ENCODE measurements at regions of chr2 and their contacts with region 1.

Region 1: GRCh38 chr2:136117909-136118818 is at the start of gene CXCR4:
- DNase-seq: peak; percentile 89
- H3K4me3 ChIP-seq: peak within 1 kb of the TSS; percentile 92
- H3K27ac ChIP-seq: peak within 1 kb of the TSS; percentile 92
- H3K4me1 ChIP-seq: peaks cover 66% of the 10 kb centered on the region
- CTCF ChIP-seq: peak; percentile 33; the same call in 1 of the 2 replicates
- total RNA-seq, gene CXCR4: 367 and 432 TPM in 2 replicates

Region 2: DNA sequence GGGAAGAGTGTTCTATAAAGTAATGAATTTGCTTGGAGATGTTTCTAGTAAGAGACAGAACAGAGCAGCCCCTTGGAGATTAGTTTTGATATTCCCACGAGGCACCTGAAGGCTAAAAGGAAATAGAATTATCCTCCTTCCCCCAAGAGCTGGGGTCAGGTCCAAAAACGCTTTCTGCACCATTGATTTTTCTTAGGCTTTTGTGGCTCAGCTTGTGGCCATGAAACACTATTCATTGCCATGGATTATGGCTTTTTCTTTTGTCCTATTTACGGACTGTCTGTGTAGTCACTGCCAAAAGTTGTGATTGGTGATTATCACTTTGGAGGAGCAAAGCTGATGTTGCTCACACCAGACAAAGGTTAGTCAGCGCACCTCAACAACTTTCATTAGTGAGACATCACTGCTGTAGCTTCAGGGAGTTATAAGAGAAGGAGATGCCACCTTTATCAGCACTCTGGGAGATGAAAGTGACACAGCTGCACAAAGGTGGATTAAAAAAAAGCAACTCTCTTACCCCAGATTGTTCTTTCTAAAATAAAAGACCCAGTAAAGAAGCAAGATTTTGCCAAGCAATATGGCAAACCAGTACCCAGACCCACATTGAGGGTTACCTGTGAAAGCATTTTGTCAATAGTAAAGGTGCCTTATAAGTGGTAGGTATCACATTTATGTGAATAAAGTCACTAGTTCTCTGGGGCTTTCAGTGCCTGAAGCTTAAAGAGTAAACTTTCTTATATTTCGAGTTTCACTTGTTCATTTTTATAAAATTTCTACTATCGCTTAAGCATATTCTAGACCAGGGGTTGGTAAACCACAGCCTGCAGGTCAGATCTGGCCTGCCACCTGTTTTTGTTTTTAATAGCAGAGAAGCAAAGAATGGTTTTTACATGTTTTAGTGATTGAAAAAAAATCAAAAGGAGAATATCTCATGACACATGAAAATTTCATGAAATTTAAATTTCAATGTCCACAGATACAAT is 10.8 kb before region 1 on chr2:
- CTCF ChIA-PET with region 1: no interaction called
- POLR2A ChIA-PET with region 1: interaction called, 17 read pairs
- intact Hi-C with region 1: no loop called
- DNase-seq: no peak
- H3K4me3 ChIP-seq: peak overlapping the region; percentile 15
- H3K27ac ChIP-seq: peak overlapping the region; percentile 32
- H3K4me1 ChIP-seq: peaks cover 65% of the 10 kb centered on the region
- CTCF ChIP-seq: no peak; the same call in 1 of the 2 replicates

Region 3: GRCh38 chr2:136327162-136327852 is 209.1 kb after region 1 on chr2:
- CTCF ChIA-PET with region 1: no interaction called
- POLR2A ChIA-PET with region 1: no interaction called
- intact Hi-C with region 1: loop called (anchors 5 kb)
- DNase-seq: peak; percentile 78
- H3K4me3 ChIP-seq: peak overlapping the region; percentile 63
- H3K27ac ChIP-seq: peak overlapping the region; percentile 81
- H3K4me1 ChIP-seq: peaks cover 74% of the 10 kb centered on the region
- CTCF ChIP-seq: no peak; the same call in 1 of the 2 replicates